ENCODE measurements at regions of chr6 and their contacts with region 1.

Region 1: DNA sequence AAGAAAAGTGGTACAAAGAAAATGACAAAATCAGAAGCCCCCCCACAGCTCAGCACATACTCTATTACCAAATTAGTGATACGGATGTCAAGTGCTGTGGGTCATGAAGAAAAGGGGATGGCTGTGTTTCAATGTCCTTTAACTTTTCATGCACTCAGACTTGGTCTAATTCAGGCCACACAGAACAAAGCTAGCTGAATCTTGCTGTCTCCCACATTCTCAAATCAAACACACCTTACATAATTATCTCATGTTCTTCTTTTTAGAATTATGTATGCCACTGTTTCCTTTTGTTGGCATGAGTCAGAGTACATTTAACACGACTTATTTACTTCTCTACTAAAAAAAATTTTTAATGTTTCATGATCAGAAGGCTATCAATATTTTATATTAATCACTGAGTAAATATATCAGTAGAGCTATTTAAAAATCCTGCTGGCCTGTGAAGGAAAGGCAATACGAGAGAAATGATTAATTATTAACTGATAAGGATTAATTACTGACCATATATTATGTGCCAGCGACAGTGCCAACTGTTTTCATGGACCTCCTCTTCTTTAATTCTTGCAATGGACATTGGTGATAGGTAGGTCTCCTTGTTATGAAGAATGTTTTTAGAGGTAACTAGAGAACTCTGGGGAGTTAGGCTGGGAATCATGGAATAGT is 596.5 kb upstream of the AGPAT4 start:
- DNase-seq: no peak
- ATAC-seq: no peak

Region 2: GRCh38 chr6:161850562-161850961 is 19.8 kb before region 1 on chr6:
- intact Hi-C with region 1: no loop called
- DNase-seq: no peak
- ATAC-seq: no peak

Region 3: DNA sequence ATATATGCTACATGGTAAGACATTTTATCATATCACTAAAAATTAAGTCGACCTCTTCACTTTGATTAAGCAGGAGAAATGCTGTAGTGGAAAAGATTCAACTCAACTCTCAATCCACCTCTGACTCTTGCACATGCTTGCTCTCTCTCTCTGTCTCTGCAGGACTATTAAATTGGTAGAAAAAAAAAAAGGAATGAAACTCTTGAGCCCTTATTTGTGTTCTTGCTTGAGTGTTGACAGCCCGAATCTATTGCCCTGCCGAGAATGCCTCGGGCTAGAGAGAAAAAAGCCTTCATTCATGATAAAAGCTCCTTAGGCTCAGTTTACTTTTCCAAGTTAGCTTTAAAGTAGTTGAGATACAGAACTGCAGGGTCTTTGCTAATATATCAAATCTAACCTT is 135.0 kb after region 1 on chr6:
- intact Hi-C with region 1: loop called in 1 of 2 experiments (anchors 10 kb)
- DNase-seq: no peak
- ATAC-seq: no peak

Region 4: DNA sequence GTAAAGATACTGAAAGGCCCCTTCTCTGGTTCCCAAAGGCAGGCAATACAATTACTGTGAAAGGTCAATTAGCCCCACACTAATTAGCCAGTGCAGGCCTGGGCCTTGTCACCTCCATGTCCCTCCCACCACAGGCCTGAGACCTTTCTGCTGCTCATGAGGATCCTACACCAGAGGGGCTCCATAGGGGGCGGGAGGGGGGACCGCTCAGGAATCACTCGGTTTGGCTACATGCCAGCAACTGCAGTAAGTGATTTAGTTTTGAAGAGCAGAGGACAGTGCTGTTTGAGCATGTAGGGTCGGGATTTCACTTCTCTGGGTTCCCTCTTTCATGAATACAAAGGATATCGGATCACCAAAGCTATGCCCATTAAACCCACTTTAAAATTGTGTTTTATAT is 401.6 kb after region 1 on chr6:
- intact Hi-C with region 1: no loop called
- DNase-seq: no peak
- ATAC-seq: no peak